Activated T-helper 1 cell treated with anti-CD3 and anti-CD28 coated beads, Interleukin-12 subunit alpha, Interleukin-12 subunit beta, Interleukin-2, Interleukin-4 antibody, amounts not matched to agents 30 ng/mL and 10 ng/mL and 1 ng/mL, durations not matched to agents 14 hours and 24 hours and 36 hours (primary cell): ENCODE measurements at regions of chr19 and their contacts with region 1.

Region 1: GRCh38 chr19:17830567-17831418 is 9.5 kb upstream of the INSL3 start:
- DNase-seq: peak; percentile 12
- H3K4me3 Mint-ChIP-seq: no peak overlapping the region
- H3K27ac Mint-ChIP-seq: no peak overlapping the region
- H3K4me1 Mint-ChIP-seq: peaks cover 11% of the 10 kb centered on the region
- H3K27me3 Mint-ChIP-seq: no peaks in the 10 kb centered on the region

Region 2: DNA sequence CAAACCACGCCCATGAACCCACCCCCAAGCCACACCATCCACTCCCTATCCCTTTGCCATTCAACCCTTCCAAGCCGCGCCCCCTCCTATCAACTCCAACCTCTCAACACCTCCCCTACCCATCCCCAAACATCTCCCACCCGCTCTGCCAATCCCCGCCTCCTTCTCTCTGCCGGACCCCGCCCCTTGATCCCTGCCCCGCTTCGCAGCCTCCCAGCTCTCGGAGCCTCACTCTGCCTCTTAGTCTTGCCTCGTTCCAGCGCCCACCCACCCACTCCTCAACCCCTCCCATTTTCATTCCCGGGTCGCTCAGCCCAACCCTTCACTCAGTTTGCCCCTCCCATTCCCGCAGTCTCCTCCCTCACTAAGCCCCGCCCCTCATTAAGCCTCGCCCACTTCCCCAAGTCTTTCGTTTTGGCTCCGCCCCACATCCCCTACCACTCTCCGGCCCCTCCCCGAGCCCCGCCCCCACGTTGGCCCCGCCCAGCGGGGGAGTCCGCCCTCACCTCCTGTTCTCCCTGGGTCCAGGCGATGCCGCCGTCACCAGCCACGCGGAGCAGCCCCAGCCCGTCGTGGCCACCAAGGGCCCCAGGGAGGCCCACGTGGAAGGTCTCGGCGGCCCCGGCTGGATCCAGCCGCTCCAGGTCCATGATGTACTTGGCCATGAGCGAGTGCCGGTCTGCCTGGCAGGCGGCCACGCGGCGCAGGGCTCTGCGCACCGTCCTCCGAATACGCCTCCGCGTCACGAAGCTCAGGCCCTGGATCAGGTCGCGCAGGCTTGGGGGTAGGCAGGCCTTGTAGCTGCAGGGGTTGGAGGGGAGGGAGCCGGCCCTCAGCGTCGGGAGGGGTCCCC is 11.2 kb after region 1 on chr19:
- intact Hi-C with region 1: loop called (anchors 1 kb)
- DNase-seq: peak; percentile 46
- H3K4me3 Mint-ChIP-seq: no peak overlapping the region
- H3K27ac Mint-ChIP-seq: no peak overlapping the region
- H3K4me1 Mint-ChIP-seq: peaks cover 40% of the 10 kb centered on the region
- H3K27me3 Mint-ChIP-seq: no peaks in the 10 kb centered on the region

Region 3: GRCh38 chr19:17847538-17848366 is 17.0 kb after region 1 on chr19 and contains the start of gene JAK3:
- intact Hi-C with region 1: loop called (anchors 1 kb)
- DNase-seq: peak; percentile 87
- H3K4me3 Mint-ChIP-seq: peak within 1 kb of the TSS; percentile 93
- H3K27ac Mint-ChIP-seq: peak within 1 kb of the TSS; percentile 99
- H3K4me1 Mint-ChIP-seq: peaks cover 70% of the 10 kb centered on the region
- H3K27me3 Mint-ChIP-seq: no peaks in the 10 kb centered on the region
- total RNA-seq, gene JAK3: 222 and 227 TPM in 2 replicates

Region 4: DNA sequence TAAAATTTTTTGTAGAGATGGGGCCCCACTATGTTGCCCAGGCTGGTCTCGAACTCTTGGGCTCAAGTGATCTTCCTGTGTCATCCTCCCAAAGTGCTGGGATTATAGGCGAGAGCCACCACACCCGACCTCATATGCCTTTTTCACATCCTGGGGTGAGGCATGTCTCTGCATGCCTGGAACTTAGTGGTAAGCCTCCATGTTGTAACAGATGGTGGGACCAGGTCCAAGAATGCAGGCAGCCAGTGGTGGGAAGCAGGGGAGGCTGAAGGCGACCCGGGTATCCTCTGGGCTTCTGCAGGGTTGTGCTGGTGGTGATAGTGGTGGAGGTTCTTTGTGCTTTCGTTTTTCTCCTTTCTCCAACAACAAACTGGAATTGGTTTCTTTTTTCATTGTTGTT is 71.9 kb after region 1 on chr19:
- intact Hi-C with region 1: no loop called
- DNase-seq: no peak
- H3K4me3 Mint-ChIP-seq: no peak overlapping the region
- H3K27ac Mint-ChIP-seq: no peak overlapping the region
- H3K4me1 Mint-ChIP-seq: no peaks in the 10 kb centered on the region
- H3K27me3 Mint-ChIP-seq: peaks cover 13% of the 10 kb centered on the region

Region 5: GRCh38 chr19:18809150-18809868 is 978.5 kb after region 1 on chr19:
- intact Hi-C with region 1: no loop called
- DNase-seq: no peak
- H3K4me3 Mint-ChIP-seq: no peak overlapping the region
- H3K27ac Mint-ChIP-seq: no peak overlapping the region
- H3K4me1 Mint-ChIP-seq: peaks cover 5% of the 10 kb centered on the region
- H3K27me3 Mint-ChIP-seq: peaks cover 8% of the 10 kb centered on the region